ENCODE measurements at regions of chr5 and their contacts with region 1.

Region 1: DNA sequence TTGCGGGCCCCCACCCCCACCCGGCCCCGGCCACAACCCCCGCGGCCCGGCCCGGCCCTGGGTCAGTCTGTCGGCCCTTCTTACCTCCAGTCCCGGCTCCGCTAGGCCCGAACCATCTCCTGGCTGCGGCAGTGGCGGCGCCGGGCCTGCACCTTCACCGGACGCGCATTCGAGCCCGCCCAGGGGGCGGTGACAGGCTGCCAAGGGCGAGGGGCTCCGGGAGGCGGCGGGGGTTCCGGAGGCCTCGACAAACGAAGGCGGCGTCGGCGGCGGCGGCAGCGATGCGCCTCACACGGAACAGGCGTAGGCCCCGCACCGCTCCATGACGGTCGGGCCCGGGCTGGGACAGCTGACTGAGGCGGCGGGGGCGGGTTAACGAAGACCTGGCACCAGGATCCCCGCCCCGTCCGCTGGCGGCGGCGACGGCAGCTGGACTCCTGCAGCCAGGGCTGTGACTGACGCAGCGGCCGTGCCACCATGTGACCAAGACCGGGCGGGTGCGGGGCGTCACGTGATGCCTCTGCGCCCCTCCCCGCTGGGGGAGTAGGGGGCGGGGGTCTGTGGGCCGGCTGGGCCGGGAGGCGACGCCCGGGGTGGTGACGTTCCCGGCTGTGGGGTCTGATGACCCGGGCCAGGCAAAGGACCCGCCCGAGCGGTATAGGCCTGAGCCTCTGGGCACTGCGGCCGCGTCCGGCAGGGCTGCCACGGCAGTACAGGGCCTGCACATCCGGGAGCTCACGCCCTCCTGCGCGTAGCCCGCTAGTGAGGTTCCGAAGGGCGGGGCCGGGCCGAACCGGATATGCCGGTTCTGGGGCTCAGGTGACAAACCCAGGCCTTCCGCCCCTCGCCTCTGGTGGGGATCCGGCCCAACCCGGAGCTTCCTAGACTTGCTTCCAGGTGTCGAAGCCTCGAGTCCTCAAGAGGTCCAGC is at the start of gene AFF4:
- DNase-seq: peak; percentile 95
- ATAC-seq: peak; percentile 93
- H3K4me3 Mint-ChIP-seq: peak within 1 kb of the TSS; percentile 98
- H3K27ac Mint-ChIP-seq: peak within 1 kb of the TSS; percentile 99
- H3K4me1 Mint-ChIP-seq: peaks cover 18% of the 10 kb centered on the region
- H3K27me3 Mint-ChIP-seq: no peaks in the 10 kb centered on the region
- CTCF ChIP-seq: no peak
- total RNA-seq, gene AFF4: 53.2 to 58.1 TPM (median 55.3 TPM) in 3 replicates

Region 2: DNA sequence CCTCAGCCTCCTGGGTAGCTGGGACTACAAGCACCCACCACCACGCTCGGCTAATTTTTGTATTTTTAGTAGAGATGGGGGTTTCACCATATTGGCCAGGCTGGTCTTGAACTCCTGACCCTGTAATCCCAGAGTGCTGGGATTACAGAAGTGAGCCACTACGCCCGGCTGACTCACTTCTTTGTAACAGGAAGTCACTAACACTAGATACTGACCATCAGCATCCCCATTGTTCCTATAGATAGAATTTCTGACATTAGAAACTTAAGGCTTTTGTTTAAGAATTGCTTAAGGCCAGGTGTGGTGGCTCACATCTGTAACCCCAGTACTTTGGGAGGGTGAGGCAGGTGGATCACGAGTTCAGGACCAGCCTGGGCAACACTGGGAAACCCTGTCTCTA is 47.8 kb before region 1 on chr5:
- CTCF ChIA-PET with region 1: no interaction called
- POLR2A ChIA-PET with region 1: no interaction called
- DNase-seq: no peak
- ATAC-seq: no peak
- H3K4me3 Mint-ChIP-seq: no peak overlapping the region
- H3K27ac Mint-ChIP-seq: no peak overlapping the region
- H3K4me1 Mint-ChIP-seq: peaks cover 3% of the 10 kb centered on the region
- H3K27me3 Mint-ChIP-seq: no peaks in the 10 kb centered on the region
- CTCF ChIP-seq: no peak

Region 3: GRCh38 chr5:133032852-133033742 is 69.7 kb after region 1 on chr5:
- CTCF ChIA-PET with region 1: no interaction called
- POLR2A ChIA-PET with region 1: no interaction called
- DNase-seq: no peak
- ATAC-seq: no peak
- H3K4me3 Mint-ChIP-seq: no peak overlapping the region
- H3K27ac Mint-ChIP-seq: peak overlapping the region; percentile 5; the same call in 1 of the 2 replicates
- H3K4me1 Mint-ChIP-seq: peaks cover 16% of the 10 kb centered on the region
- H3K27me3 Mint-ChIP-seq: no peaks in the 10 kb centered on the region
- CTCF ChIP-seq: no peak

Region 4: DNA sequence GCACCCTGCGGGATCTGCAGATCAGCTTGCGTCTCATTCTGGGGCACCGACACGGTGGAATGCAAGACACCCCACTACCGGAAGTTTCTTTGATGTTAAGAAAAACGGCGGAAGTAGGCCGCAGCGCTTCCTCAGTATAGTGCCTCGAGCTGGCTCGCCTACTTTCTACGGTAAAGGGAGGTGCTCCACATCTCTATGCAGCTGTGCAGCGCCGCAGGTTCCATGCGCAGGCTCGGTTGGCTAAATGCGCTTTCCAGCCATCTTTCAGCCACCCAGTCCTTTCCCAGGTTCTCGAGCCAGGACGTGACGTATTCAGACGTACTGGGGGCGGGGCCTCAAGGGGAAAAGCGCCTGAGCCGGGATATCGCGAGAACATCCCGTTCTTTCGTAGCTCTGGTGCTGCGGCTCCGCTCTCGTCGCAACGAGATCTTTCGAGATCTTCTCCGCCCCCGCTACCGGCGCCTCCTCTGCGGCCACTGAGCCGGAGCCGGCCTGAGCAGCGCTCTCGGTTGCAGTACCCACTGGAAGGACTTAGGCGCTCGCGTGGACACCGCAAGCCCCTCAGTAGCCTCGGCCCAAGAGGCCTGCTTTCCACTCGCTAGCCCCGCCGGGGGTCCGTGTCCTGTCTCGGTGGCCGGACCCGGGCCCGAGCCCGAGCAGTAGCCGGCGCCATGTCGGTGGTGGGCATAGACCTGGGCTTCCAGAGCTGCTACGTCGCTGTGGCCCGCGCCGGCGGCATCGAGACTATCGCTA is 88.3 kb after region 1 on chr5 and contains the start of gene HSPA4:
- CTCF ChIA-PET with region 1: interaction called, 3 read pairs
- POLR2A ChIA-PET with region 1: interaction called, 22 read pairs
- DNase-seq: peak; percentile 98
- ATAC-seq: peak; percentile 82
- H3K4me3 Mint-ChIP-seq: peak within 1 kb of the TSS; percentile 89
- H3K27ac Mint-ChIP-seq: peak within 1 kb of the TSS; percentile 100
- H3K4me1 Mint-ChIP-seq: peaks cover 51% of the 10 kb centered on the region
- H3K27me3 Mint-ChIP-seq: no peaks in the 10 kb centered on the region
- CTCF ChIP-seq: no peak
- total RNA-seq, gene HSPA4: 316 to 363 TPM (median 335 TPM) in 3 replicates